Activated naive CD4-positive, alpha-beta T cell treated with anti-CD3 and anti-CD28 coated beads, Interleukin-2, amount 10 ng/mL, durations not matched to agents 7 days and 5 days (primary cell): ENCODE measurements at regions of chr2 and their contacts with region 1.

Region 1: DNA sequence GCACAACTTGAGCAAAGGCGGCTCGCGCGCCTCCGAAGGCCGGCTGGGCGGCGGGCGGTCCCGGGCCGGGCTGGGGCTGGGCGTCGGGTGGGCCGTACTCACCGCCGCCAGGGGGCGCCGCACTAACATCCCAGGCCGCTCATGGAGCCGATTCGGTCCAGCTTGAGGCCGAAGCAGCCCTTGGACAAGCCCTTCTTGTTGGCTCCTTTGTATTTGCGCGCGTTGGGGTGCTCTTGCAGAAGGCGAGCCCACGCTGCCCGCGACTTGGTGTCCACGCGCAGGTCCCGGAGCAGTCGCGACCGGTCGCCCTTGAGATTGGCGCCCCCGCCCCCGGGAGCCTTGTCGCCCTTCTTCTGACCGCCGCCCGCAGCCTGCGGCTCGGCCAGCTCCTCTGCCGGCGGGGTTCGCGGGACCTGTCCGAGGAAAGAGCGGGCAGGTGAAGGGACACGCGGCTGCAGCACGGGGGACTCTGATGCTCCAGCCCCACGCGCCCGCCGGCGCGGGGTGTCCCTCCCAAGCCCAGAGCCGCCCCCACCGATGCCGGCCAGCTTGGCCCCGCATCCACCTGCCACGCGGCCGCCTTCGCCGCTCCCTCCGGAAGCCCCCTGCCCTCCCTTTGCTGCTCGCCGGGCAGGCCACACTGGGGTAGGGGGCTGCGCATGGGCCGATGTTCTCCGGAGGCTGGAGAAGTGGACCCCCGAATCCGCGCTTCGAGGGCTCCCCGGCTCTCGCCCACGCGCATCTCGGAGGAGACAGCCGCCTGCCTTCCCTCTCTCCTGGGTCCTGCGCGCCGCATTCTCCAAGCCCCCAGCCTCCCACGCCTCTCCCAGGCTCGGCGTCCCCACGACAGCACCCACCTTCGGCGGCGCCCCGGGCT is 655 bp downstream of the NPPC start:
- DNase-seq: peak; percentile 75
- H3K4me3 Mint-ChIP-seq: peak overlapping the region; percentile 54
- H3K27ac Mint-ChIP-seq: no peak overlapping the region
- H3K4me1 Mint-ChIP-seq: peaks cover 16% of the 10 kb centered on the region
- H3K27me3 Mint-ChIP-seq: peaks cover 85% of the 10 kb centered on the region

Region 2: DNA sequence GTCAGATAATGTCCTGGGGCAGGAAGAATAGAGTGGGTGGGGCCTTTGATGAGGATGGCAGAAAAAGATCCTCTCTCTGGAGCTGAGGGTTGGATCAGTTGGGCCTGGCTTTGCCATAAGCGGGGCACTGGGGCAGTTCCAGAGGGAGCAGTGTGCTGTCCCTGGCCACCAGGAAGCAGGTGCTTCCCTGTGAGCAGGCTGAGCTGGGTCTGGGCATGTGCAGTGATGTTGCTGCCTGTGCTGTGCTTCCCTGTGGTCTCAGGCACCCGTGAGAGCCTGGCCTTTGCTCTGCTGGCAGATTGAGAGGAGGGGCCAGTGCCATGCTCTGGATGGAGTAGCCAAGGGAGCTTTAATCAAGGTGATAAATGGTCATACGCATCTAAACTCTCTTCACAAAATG is 15.3 kb after region 1 on chr2:
- CTCF ChIA-PET with region 1: no interaction called
- DNase-seq: no peak
- H3K4me3 Mint-ChIP-seq: no peak overlapping the region
- H3K27ac Mint-ChIP-seq: no peak overlapping the region
- H3K4me1 Mint-ChIP-seq: no peaks in the 10 kb centered on the region
- H3K27me3 Mint-ChIP-seq: peaks cover 9% of the 10 kb centered on the region

Region 3: GRCh38 chr2:232142049-232142448 is 216.5 kb after region 1 on chr2:
- CTCF ChIA-PET with region 1: interaction called, 50 read pairs
- DNase-seq: peak; percentile 49
- H3K4me3 Mint-ChIP-seq: no peak overlapping the region
- H3K27ac Mint-ChIP-seq: no peak overlapping the region
- H3K4me1 Mint-ChIP-seq: peaks cover 27% of the 10 kb centered on the region
- H3K27me3 Mint-ChIP-seq: no peaks in the 10 kb centered on the region

Region 4: DNA sequence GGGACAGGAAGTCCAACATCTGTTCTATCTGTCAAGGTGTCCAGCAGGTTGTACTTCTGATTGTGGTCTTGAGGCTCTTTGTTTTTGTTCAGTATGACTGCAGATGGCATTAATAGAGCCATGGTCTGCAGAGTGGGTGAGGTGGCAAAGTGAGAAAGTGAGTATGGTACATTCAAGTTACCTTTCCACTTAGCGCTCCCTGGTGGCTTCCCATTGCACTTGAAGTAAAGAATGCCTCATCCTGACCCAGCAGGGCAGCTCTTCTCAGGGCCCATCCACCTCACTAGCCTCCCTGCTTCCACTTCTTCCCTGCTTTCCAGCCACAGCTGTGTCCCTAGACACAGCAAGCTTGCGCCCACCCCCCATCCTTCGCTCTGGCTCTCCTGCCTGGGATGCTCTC is 305.0 kb after region 1 on chr2:
- CTCF ChIA-PET with region 1: interaction called, 17 read pairs
- DNase-seq: peak; percentile 51
- H3K4me3 Mint-ChIP-seq: no peak overlapping the region
- H3K27ac Mint-ChIP-seq: no peak overlapping the region
- H3K4me1 Mint-ChIP-seq: peaks cover 12% of the 10 kb centered on the region
- H3K27me3 Mint-ChIP-seq: no peaks in the 10 kb centered on the region